ENCODE measurements at regions of chr10 and their contacts with region 1.

Region 1: DNA sequence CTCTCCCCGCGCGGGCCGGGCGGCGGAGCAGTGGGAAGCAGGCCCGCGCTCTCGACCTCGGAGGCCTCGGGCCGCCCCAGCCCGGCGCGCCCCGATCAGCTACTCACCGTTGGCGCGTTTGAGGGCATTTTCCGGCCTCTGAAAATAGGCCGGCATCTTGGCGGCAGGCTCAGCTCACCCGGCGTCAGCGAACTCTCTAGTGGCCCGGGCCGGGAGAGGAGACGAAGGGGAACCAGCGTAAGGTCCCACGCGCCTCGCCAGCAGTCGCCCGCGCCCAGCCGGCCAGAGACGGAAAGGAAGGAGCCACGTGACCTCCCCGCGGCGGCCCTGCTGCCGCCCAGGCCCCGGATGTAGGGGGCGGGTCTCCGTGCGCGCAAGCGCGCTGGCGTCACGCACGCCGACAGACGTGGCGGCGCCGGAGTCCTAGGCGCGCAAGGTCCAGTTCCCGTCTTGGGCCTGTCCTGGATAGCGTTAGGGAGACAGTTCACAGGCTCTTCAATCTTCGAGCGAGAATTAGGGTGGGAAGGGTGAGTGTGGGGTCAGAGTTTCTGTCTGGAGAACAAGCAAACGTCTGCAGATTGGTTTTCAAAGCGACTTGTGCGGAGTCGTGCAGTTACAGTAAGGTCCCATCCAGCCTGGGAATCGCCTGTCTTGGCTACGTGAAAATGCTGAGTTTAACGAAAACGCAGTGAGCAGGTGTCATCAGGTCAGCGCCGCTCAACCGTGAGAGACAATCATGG is at the start of gene EIF3A:
- DNase-seq: peak; percentile 91
- H3K4me3 ChIP-seq: peak within 1 kb of the TSS; percentile 71 to 97 (median 85)
- H3K27ac ChIP-seq: peak within 1 kb of the TSS; percentile 93
- H3K4me1 ChIP-seq: peaks cover 8% of the 10 kb centered on the region
- H3K27me3 ChIP-seq: no peaks in the 10 kb centered on the region
- CTCF ChIP-seq: no peak
- total RNA-seq, gene EIF3A: 115 to 170 TPM

Region 2: DNA sequence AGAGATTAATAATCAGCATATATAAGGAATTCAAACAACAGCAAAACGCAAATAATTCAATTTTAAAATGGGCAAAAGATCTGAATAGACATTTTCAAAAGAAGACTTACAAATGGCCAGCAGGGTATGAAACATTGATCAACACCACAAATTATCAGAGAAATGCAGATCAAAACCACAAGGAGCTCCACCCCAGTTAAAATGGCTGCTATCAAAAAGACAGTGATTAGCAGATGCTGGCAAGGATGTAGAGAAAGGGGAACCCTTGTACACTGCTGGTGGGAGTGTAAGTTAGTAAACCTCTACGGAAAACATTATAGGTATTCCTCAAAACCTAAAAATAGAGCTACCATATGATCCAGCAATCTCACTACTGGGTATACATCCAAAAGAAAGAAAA is 197.9 kb before region 1 on chr10:
- CTCF ChIA-PET with region 1: no interaction called
- dilution Hi-C with region 1: no loop called
- in situ Hi-C with region 1: no loop called
- intact Hi-C with region 1: no loop called
- DNase-seq: no peak
- H3K4me3 ChIP-seq: no peak overlapping the region
- H3K27ac ChIP-seq: no peak overlapping the region
- H3K4me1 ChIP-seq: no peaks in the 10 kb centered on the region
- H3K27me3 ChIP-seq: no peaks in the 10 kb centered on the region
- CTCF ChIP-seq: no peak

Region 3: DNA sequence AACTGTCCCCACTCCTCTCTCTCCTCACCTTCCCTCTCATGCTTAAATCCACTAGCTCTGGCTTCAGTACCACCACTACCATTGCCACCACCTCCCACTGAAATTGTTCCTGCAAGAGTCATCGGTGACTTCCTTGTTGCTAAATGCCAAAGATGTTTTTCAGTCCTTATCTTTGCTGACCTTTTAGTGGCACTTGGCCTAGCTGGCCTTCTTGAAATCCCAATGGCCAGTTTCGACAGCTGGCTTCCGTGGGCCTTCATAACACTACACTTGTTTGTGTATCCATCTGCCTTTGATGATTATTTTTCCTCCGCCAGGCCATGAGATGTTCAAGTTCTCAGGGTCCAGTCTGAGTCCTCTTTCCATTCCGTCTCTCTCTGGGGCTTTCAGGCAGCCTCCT is 169.3 kb before region 1 on chr10:
- CTCF ChIA-PET with region 1: no interaction called
- dilution Hi-C with region 1: no loop called
- in situ Hi-C with region 1: no loop called
- intact Hi-C with region 1: no loop called
- DNase-seq: peak; percentile 11
- H3K4me3 ChIP-seq: no peak overlapping the region
- H3K27ac ChIP-seq: no peak overlapping the region
- H3K4me1 ChIP-seq: peaks cover 5% of the 10 kb centered on the region
- H3K27me3 ChIP-seq: no peaks in the 10 kb centered on the region
- CTCF ChIP-seq: no peak

Region 4: DNA sequence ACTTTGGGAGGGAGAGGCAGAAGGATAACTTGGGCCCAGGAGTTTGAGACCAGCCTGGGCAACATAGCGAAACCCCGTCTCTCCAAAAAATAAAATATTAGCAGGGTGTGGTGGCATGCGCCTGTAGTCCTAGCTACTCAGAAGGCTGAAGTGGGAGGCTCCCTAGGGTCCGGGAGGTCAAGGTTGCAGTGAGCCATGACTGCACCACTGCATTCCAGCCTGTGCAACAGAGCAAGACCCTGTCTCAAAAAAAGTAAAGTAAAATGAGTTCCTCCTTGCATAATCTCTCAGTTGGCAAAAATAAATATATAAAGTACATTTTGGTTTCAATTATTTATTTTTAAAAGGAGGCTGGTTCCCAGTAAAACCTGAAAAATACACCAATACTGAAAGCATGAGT is 39.4 kb before region 1 on chr10:
- CTCF ChIA-PET with region 1: no interaction called
- dilution Hi-C with region 1: no loop called
- in situ Hi-C with region 1: no loop called
- intact Hi-C with region 1: loop called (anchors 5 kb)
- DNase-seq: no peak
- H3K4me3 ChIP-seq: no peak overlapping the region
- H3K27ac ChIP-seq: no peak overlapping the region
- H3K4me1 ChIP-seq: no peaks in the 10 kb centered on the region
- H3K27me3 ChIP-seq: no peaks in the 10 kb centered on the region
- CTCF ChIP-seq: no peak

Region 5: GRCh38 chr10:119090968-119091367 is 10.3 kb after region 1 on chr10:
- CTCF ChIA-PET with region 1: no interaction called
- dilution Hi-C with region 1: no loop called
- in situ Hi-C with region 1: no loop called
- intact Hi-C with region 1: loop called (anchors 1 kb)
- DNase-seq: peak; percentile 95
- H3K4me3 ChIP-seq: no peak overlapping the region
- H3K27ac ChIP-seq: peak overlapping the region; percentile 35
- H3K4me1 ChIP-seq: peaks cover 22% of the 10 kb centered on the region
- H3K27me3 ChIP-seq: no peaks in the 10 kb centered on the region
- CTCF ChIP-seq: no peak

Region 6: DNA sequence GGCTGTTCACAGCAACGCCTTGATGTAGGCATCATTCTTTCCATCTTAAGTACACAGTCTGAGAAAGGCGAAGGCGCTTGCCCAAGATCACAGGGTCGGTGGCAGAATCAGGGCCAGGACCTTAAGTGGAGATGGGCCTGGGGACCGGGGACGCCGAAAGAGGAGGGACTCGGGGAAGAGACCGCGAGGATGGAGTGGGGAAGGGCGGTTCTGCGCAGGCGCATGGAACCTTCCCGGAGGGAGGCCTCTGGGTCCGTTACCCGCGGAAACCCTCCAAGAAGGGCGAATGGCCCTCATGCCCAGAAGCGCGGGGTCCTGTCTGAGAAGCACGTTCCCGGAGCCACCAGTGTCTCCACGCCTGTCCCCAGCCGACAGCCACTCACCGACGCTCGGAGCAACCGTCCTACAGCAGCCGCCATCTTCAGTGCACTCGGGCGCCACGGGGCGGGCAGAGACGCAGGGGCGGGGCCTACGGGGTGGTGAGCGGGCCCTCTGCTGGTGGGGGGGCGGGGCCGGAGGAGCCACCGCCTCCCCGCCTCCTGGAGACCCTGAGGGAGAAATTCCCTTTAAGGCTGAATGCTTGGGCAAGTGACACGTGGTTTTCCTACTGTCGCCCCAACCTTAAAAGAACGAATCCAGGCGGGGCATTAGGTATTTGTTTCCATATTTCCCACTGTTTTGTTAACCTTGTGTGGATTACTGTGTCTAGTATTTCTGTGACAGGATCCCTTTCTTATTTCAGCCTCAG is 97.9 kb after region 1 on chr10 and contains the start of gene PRDX3:
- CTCF ChIA-PET with region 1: no interaction called
- dilution Hi-C with region 1: no loop called
- in situ Hi-C with region 1: no loop called
- intact Hi-C with region 1: loop called (anchors 5 kb)
- DNase-seq: peak; percentile 84
- H3K4me3 ChIP-seq: peak within 1 kb of the TSS; percentile 67 to 100 (median 88)
- H3K27ac ChIP-seq: peak within 1 kb of the TSS; percentile 52
- H3K4me1 ChIP-seq: peaks cover 10% of the 10 kb centered on the region
- H3K27me3 ChIP-seq: no peaks in the 10 kb centered on the region
- CTCF ChIP-seq: peak in 1 of 2 donors; percentile 15
- total RNA-seq, gene PRDX3: 96.6 to 125 TPM

Region 7: GRCh38 chr10:119973261-119973660 is 892.6 kb after region 1 on chr10:
- CTCF ChIA-PET with region 1: no interaction called
- dilution Hi-C with region 1: no loop called
- in situ Hi-C with region 1: no loop called
- intact Hi-C with region 1: no loop called
- DNase-seq: peak; percentile 5
- H3K4me3 ChIP-seq: no peak overlapping the region
- H3K27ac ChIP-seq: no peak overlapping the region
- H3K4me1 ChIP-seq: no peaks in the 10 kb centered on the region
- H3K27me3 ChIP-seq: no peaks in the 10 kb centered on the region
- CTCF ChIP-seq: no peak